Left colon (tissue), 2 donors: ENCODE measurements at regions of chr5 and their contacts with region 1.

Region 1: GRCh38 chr5:81506900-81507588 is 113.1 kb upstream of the ACOT12 start:
- DNase-seq: peak; percentile 14 to 36
- ATAC-seq: peak; percentile 99

Region 2: GRCh38 chr5:81719743-81720345 is 212.8 kb after region 1 on chr5:
- intact Hi-C with region 1: loop called in 1 of 2 experiments (anchors 10 kb)
- DNase-seq: no peak
- ATAC-seq: no peak